Lower leg skin (tissue), 4 donors: ENCODE measurements at regions of chr1 and their contacts with region 1.

Region 1: DNA sequence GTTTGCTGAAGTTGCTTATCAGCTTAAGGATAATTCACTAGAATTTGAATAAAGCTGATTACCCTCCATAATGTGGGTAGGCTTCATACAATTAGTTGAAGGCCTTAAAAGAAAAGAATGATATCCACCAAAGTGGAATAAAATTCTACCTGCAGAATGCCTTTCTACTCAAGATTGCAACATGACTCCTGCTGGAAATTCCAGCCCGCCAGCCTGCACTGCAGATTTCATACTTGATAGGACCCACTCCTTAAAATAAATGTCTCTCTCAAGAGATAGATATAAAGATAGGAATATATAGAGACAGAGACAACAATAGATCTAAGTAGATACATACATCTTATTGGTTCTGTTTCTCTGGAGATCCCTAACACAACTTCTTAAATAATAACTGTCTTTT is 23.7 kb upstream of the INSL5 start:
- DNase-seq: no peak
- H3K4me3 ChIP-seq: no peak overlapping the region
- CTCF ChIP-seq: no peak
- POLR2A ChIP-seq: no peak

Region 2: GRCh38 chr1:65850281-65850680 is 974.5 kb before region 1 on chr1:
- intact Hi-C with region 1: loop called (anchors 10 kb)
- DNase-seq: no peak
- H3K4me3 ChIP-seq: no peak overlapping the region
- CTCF ChIP-seq: no peak
- POLR2A ChIP-seq: no peak

Region 3: GRCh38 chr1:66788231-66788939 is 36.4 kb before region 1 on chr1:
- intact Hi-C with region 1: no loop called
- DNase-seq: no peak
- H3K4me3 ChIP-seq: no peak overlapping the region
- CTCF ChIP-seq: no peak
- POLR2A ChIP-seq: no peak